Endothelial cell of umbilical vein (primary cell): ENCODE measurements at regions of chr1 and their contacts with region 1.

Region 1: DNA sequence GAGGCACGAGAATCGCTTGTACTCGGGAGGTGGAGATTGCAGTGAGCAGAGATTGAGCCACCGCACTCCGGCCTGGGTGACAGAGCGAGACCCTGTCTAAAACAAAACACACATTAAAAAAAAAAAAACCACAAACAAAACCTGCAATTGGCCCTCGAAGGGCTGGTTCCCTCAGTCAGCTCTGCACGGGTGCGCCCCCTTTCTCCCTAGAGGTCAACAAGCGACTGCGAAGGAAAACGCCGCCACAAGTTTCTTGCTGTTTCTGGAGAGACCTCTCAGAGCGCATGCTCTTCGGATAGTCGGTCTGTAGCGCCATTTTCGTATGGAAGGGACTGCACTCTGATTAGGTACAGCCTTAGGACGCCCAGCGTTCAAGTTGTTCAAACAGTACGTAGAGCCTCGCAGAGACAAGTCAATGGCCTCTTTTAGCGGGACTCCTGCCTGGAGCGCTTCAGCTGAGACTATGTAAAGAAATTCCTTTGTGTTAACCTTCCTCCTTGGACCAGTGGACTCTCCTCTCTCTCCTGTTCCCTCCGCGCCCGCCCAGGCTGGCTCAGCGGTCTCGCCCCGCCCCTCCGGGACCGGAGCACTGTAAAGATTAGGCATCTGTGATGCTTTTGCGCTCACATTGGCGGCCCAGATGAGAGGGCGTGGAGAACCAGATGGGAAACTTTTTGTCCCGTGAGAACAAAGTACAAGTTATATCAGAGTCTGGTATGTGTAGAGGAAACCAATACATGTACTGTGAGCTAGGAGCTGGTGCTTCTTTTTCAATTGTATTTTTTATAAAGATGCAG is 1.0 kb upstream of the CDC14A start:
- DNase-seq: peak; percentile 96
- H3K4me3 ChIP-seq: peak overlapping the region; percentile 77 to 97 (median 84)
- H3K27ac ChIP-seq: peak overlapping the region; percentile 84
- H3K4me1 ChIP-seq: peaks cover 33% of the 10 kb centered on the region
- H3K27me3 ChIP-seq: no peaks in the 10 kb centered on the region
- CTCF ChIP-seq: peak; percentile 18 to 41
- POLR2A ChIP-seq: peak; percentile 89

Region 2: GRCh38 chr1:100037927-100038659 is 313.2 kb before region 1 on chr1:
- CTCF ChIA-PET with region 1: no interaction called
- POLR2A ChIA-PET with region 1: no interaction called
- dilution Hi-C with region 1: no loop called
- intact Hi-C with region 1: loop called (anchors 1 kb)
- DNase-seq: peak; percentile 87
- H3K4me3 ChIP-seq: peak overlapping the region; percentile 80 to 99 (median 95)
- H3K27ac ChIP-seq: peak overlapping the region; percentile 96
- H3K4me1 ChIP-seq: peaks cover 24% of the 10 kb centered on the region
- H3K27me3 ChIP-seq: no peaks in the 10 kb centered on the region
- CTCF ChIP-seq: no peak
- POLR2A ChIP-seq: peak; percentile 96

Region 3: DNA sequence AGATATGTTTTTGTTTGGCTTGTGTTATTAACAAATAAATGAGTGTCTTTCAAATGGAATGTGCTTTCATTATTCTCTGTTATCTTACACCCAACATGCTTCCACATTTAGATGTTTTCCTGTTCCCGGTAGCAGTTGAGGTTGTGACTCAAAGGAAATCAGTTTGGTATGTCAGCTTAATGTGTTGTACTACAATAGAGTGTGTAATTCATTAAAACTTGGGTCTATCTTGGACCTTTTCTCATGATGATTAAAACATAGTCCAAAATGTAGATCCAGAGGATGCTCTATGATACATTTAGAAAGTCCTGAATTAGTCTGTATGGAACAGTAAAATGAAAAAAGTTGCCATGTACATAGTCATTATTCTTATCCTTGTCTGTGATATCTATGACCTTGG is 58.6 kb before region 1 on chr1:
- CTCF ChIA-PET with region 1: interaction called, 48 read pairs
- POLR2A ChIA-PET with region 1: no interaction called
- dilution Hi-C with region 1: no loop called
- intact Hi-C with region 1: loop called (anchors 1 kb)
- DNase-seq: peak; percentile 96
- H3K4me3 ChIP-seq: no peak overlapping the region
- H3K27ac ChIP-seq: peak overlapping the region; percentile 97
- H3K4me1 ChIP-seq: peaks cover 43% of the 10 kb centered on the region
- H3K27me3 ChIP-seq: no peaks in the 10 kb centered on the region
- CTCF ChIP-seq: no peak
- POLR2A ChIP-seq: peak; percentile 82

Region 4: GRCh38 chr1:100443811-100444571 is 92.7 kb after region 1 on chr1:
- CTCF ChIA-PET with region 1: interaction called, 5 read pairs
- POLR2A ChIA-PET with region 1: no interaction called
- dilution Hi-C with region 1: no loop called
- intact Hi-C with region 1: loop called (anchors 2 kb)
- DNase-seq: peak; percentile 74
- H3K4me3 ChIP-seq: peak overlapping the region in 1 of 3 experiments; percentile 3
- H3K27ac ChIP-seq: peak overlapping the region; percentile 87
- H3K4me1 ChIP-seq: peaks cover 38% of the 10 kb centered on the region
- H3K27me3 ChIP-seq: no peaks in the 10 kb centered on the region
- CTCF ChIP-seq: no peak
- POLR2A ChIP-seq: no peak

Region 5: DNA sequence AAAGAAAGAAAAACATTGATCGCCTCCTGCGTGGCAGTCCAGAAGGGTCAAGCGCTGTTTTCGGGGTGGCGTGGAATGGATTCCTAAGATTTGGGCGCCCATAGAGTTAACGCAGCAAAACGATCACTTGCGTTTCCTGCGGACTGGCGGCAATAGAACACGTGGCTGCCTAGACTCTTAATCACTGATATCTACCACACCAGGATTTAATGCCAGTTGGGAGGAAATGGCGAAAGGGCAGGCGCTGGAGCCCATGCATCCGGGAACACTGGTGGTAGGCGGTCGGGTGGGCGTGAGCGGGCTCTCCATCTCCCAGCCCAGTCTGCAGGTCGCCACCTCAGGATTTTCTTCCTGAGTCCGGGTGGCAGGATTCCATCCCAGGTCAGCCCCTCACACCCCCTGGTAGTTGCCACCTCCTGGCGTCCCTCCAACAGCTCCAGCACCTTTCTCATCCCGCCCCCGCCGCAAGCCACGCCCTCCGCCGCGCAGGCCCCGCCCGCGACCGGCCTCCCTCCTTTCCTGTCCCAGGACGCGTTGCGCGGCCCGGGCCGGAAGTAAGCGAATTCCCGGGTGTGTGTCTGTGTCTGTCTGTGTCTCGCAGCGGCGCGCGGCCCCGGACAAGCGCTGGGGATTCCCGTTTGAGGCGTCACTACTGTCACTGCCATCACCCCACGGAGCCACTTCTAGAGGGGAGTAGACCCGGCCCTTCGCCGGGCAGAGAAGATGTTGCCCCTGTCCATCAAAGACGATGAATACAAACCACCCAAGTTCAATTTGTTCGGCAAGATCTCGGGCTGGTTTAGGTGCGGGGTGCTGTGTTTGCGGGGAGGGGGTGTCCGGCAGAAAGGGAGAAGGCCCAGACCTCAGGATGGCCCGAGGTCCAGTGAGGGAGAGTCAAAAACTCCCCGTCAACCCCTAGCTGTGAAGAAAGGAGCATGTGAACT is 544.5 kb after region 1 on chr1 and contains the start of gene SLC30A7:
- CTCF ChIA-PET with region 1: no interaction called
- POLR2A ChIA-PET with region 1: no interaction called
- dilution Hi-C with region 1: no loop called
- intact Hi-C with region 1: loop called (anchors 5 kb)
- DNase-seq: peak; percentile 90
- H3K4me3 ChIP-seq: peak within 1 kb of the TSS; percentile 87 to 91 (median 91)
- H3K27ac ChIP-seq: peak within 1 kb of the TSS; percentile 93
- H3K4me1 ChIP-seq: peaks cover 26% of the 10 kb centered on the region
- H3K27me3 ChIP-seq: no peaks in the 10 kb centered on the region
- CTCF ChIP-seq: no peak
- POLR2A ChIP-seq: peak; percentile 87
- total RNA-seq, gene SLC30A7: 38.6 and 39.0 TPM in 2 replicates